ENCODE measurements at regions of chr17 and their contacts with region 1.

Region 1: GRCh38 chr17:62968445-62968923 is 2.4 kb downstream of the TANC2 start:
- DNase-seq: peak; percentile 86
- H3K4me3 ChIP-seq: peak overlapping the region; percentile 85 to 90 (median 90)
- H3K27ac ChIP-seq: peak overlapping the region; percentile 83
- H3K4me1 ChIP-seq: peaks cover 12% of the 10 kb centered on the region
- H3K27me3 ChIP-seq: no peaks in the 10 kb centered on the region
- CTCF ChIP-seq: peak; percentile 94 to 96

Region 2: GRCh38 chr17:62718367-62718966 is 250.0 kb before region 1 on chr17:
- CTCF ChIA-PET with region 1: no interaction called
- dilution Hi-C with region 1: no loop called
- in situ Hi-C with region 1: loop called in 1 of 2 experiments (anchors 10 kb)
- intact Hi-C with region 1: no loop called
- DNase-seq: peak; percentile 83
- H3K4me3 ChIP-seq: no peak overlapping the region
- H3K27ac ChIP-seq: no peak overlapping the region
- H3K4me1 ChIP-seq: peaks cover 30% of the 10 kb centered on the region
- H3K27me3 ChIP-seq: no peaks in the 10 kb centered on the region
- CTCF ChIP-seq: no peak

Region 3: GRCh38 chr17:62761917-62762316 is 206.6 kb before region 1 on chr17:
- CTCF ChIA-PET with region 1: no interaction called
- dilution Hi-C with region 1: no loop called
- in situ Hi-C with region 1: no loop called
- intact Hi-C with region 1: loop called (anchors 1 kb)
- DNase-seq: peak; percentile 95
- H3K4me3 ChIP-seq: no peak overlapping the region
- H3K27ac ChIP-seq: no peak overlapping the region
- H3K4me1 ChIP-seq: peaks cover 12% of the 10 kb centered on the region
- H3K27me3 ChIP-seq: no peaks in the 10 kb centered on the region
- CTCF ChIP-seq: no peak

Region 4: GRCh38 chr17:62819475-62820212 is 148.8 kb before region 1 on chr17:
- CTCF ChIA-PET with region 1: no interaction called
- dilution Hi-C with region 1: no loop called
- in situ Hi-C with region 1: loop called in 1 of 2 experiments (anchors 10 kb)
- intact Hi-C with region 1: loop called (anchors 1 kb)
- DNase-seq: peak; percentile 98
- H3K4me3 ChIP-seq: peak overlapping the region in 2 of 3 experiments; percentile 5 to 20
- H3K27ac ChIP-seq: peak overlapping the region; percentile 97
- H3K4me1 ChIP-seq: peaks cover 59% of the 10 kb centered on the region
- H3K27me3 ChIP-seq: no peaks in the 10 kb centered on the region
- CTCF ChIP-seq: no peak

Region 5: GRCh38 chr17:62933501-62934385 is 34.7 kb before region 1 on chr17:
- CTCF ChIA-PET with region 1: no interaction called
- dilution Hi-C with region 1: no loop called
- in situ Hi-C with region 1: no loop called
- intact Hi-C with region 1: no loop called
- DNase-seq: no peak
- H3K4me3 ChIP-seq: no peak overlapping the region
- H3K27ac ChIP-seq: no peak overlapping the region
- H3K4me1 ChIP-seq: no peaks in the 10 kb centered on the region
- H3K27me3 ChIP-seq: no peaks in the 10 kb centered on the region
- CTCF ChIP-seq: no peak

Region 6: DNA sequence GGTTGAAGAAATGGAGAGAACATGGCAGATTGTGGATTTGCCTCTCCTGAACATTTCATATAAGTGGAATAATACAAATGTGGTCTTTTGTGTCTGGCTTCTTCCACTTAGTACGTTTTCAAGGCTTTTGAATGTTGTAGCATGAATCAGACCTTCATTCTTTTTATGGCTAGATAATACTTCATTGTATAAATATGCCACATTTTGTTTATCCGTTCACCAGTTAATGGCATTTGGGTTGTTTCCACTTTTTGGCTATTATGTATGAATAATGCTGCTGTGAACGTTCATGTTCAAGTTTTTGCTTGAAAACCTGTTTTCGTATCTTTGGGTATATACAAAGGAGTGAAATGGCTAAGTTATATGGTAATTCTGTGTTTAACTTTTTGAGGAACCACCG is 127.9 kb after region 1 on chr17:
- CTCF ChIA-PET with region 1: no interaction called
- dilution Hi-C with region 1: no loop called
- in situ Hi-C with region 1: no loop called
- intact Hi-C with region 1: no loop called
- DNase-seq: no peak
- H3K4me3 ChIP-seq: no peak overlapping the region
- H3K27ac ChIP-seq: no peak overlapping the region
- H3K4me1 ChIP-seq: peaks cover 14% of the 10 kb centered on the region
- H3K27me3 ChIP-seq: no peaks in the 10 kb centered on the region
- CTCF ChIP-seq: no peak

Region 7: DNA sequence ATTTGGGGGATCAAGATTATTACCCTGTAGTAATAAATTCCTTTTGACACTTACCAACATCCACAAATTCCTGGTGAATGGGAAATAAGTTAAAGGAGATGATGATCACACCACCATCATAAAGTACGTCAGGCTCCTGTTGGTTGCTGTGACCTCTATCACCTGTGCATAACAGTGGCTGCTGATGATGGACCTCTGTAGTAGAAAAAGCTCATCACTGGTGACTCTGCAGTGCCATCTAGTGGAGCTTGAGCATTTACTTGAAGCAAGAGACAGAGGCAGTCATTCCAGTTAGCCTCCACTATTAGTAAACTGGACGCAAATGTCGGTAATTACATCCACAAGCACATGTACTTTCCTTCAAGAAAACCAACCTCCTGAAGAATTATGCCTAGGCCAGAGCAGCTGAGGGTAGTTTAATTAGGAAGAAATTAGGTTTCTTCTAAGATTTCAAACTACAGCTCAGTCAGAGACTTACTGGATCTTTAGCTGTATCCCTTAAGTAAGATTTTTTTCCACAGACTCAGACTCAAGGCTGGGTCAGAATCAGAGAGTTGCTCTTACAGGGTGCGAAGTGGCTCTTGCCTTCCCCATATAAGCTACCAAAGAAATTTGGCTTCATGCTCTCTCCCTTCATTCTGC is 438.3 kb after region 1 on chr17:
- CTCF ChIA-PET with region 1: interaction called, 8 read pairs
- dilution Hi-C with region 1: no loop called
- in situ Hi-C with region 1: no loop called
- intact Hi-C with region 1: loop called (anchors 1 kb)
- DNase-seq: peak; percentile 77
- H3K4me3 ChIP-seq: no peak overlapping the region
- H3K27ac ChIP-seq: peak overlapping the region; percentile 55
- H3K4me1 ChIP-seq: peaks cover 7% of the 10 kb centered on the region
- H3K27me3 ChIP-seq: no peaks in the 10 kb centered on the region
- CTCF ChIP-seq: peak; percentile 80 to 86

Measured in mammary epithelial cell (primary cell).